Activated CD4-positive, alpha-beta T cell treated with anti-CD3 and anti-CD28 coated beads, Interleukin-2, amount 10 ng/mL, durations not matched to agents 7 days and 5 days (primary cell): ENCODE measurements at regions of chr11 and their contacts with region 1.

Region 1: GRCh38 chr11:118791111-118791965 is at the start of gene DDX6:
- DNase-seq: peak; percentile 94
- H3K4me3 Mint-ChIP-seq: peak within 1 kb of the TSS; percentile 99
- H3K27ac Mint-ChIP-seq: peak within 1 kb of the TSS; percentile 100
- H3K4me1 Mint-ChIP-seq: peaks cover 28% of the 10 kb centered on the region
- H3K27me3 Mint-ChIP-seq: no peaks in the 10 kb centered on the region
- total RNA-seq, gene DDX6: 163 to 180 TPM

Region 2: DNA sequence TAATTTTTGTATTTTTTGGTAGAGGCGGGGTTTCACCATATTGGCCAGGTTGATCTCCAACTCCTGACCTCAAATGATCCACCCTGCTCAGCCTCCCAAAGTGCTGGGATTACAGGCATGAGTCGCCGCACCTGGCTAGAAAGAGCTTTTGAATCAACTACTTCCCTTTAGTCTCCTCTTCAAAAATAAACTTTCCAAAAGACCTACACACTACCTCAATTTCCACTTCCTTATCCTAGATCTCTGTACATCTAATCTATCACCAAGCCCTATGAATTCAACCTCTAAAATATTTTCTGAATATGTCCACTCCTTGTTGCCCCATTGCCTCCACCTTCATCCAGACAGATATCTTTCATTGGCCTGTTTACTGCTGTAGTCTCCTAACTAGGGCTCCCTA is 12.8 kb after region 1 on chr11:
- CTCF ChIA-PET with region 1: interaction called, 40 read pairs
- POLR2A ChIA-PET with region 1: interaction called, 3 read pairs
- DNase-seq: no peak
- H3K4me3 Mint-ChIP-seq: no peak overlapping the region
- H3K27ac Mint-ChIP-seq: no peak overlapping the region
- H3K4me1 Mint-ChIP-seq: no peaks in the 10 kb centered on the region
- H3K27me3 Mint-ChIP-seq: peaks cover 7% of the 10 kb centered on the region

Region 3: DNA sequence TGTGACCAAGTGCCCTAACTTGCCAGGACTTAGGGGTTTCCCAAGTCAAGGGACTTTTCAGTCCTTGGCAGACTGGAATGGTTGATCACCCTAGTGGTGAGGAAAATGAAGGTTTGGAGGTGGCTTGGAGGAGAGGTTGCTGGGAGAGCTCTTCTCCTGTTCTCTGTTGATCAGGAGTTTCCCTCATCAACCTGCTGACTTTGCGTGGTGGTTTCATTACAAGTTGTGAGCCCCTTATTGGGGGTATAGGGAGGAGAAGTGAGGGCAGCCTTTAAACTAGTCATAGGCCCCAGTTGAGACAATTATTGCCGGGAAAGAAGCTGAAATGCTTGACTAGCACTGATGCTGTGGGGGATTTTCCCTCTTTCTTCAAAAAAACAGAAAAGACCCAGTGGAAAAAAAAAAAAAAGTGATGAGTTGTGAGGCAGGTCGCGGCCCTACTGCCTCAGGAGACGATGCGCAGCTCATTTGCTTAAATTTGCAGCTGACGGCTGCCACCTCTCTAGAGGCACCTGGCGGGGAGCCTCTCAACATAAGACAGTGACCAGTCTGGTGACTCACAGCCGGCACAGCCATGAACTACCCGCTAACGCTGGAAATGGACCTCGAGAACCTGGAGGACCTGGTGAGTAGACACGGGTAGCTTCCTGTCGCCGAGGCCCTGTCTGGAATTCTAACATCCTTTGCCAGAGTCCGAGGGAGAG is 92.2 kb after region 1 on chr11 and contains the start of gene CXCR5:
- CTCF ChIA-PET with region 1: interaction called, 5 read pairs
- POLR2A ChIA-PET with region 1: interaction called, 10 read pairs
- DNase-seq: no peak
- H3K4me3 Mint-ChIP-seq: peak within 1 kb of the TSS; percentile 14
- H3K27ac Mint-ChIP-seq: peak within 1 kb of the TSS; percentile 52
- H3K4me1 Mint-ChIP-seq: peaks cover 56% of the 10 kb centered on the region
- H3K27me3 Mint-ChIP-seq: no peaks in the 10 kb centered on the region
- total RNA-seq, gene CXCR5: 0.50 to 0.52 TPM

Region 4: DNA sequence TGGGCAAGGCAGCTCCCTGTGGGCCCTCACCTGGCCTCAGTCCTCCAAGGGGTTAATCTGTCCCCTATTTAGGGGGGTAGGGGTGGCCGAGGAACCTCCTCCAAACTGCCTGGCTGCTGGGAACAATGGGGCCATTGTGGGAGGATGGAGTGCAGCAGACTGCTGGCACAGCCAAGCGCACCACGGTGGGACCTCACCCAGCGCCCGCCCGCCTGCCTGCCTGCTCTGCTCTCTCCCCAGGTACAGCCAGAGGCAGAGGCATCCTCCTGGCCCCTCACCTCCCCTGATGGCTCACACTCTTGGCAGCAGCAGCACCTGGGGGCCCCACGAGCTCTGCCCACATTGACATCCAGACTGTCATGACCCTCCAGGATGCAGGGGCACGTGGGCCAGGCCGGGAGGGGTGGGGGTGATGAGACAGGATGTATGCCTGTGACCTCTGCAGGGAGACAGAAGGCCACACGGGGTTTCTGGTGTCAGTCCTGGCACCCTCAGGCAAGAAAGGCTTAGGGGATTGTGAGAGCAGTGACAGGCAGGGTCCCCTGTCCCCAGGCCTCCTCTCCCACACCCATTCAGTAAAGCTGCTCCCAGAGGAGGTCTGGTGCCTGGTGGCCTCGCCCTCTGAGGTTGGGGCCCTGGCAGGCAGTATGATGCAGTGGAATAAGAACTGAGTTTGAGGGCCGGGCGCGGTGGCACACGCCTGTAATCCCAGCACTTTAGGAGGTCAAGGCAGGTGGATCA is 123.0 kb after region 1 on chr11:
- CTCF ChIA-PET with region 1: interaction called, 5 read pairs
- POLR2A ChIA-PET with region 1: interaction called, 11 read pairs
- DNase-seq: peak; percentile 81
- H3K4me3 Mint-ChIP-seq: peak overlapping the region; percentile 70
- H3K27ac Mint-ChIP-seq: peak overlapping the region; percentile 94
- H3K4me1 Mint-ChIP-seq: peaks cover 83% of the 10 kb centered on the region
- H3K27me3 Mint-ChIP-seq: no peaks in the 10 kb centered on the region